Activated naive CD4-positive, alpha-beta T cell treated with anti-CD3 and anti-CD28 coated beads for 36 hours (primary cell): ENCODE measurements at regions of chr4 and their contacts with region 1.

Region 1: DNA sequence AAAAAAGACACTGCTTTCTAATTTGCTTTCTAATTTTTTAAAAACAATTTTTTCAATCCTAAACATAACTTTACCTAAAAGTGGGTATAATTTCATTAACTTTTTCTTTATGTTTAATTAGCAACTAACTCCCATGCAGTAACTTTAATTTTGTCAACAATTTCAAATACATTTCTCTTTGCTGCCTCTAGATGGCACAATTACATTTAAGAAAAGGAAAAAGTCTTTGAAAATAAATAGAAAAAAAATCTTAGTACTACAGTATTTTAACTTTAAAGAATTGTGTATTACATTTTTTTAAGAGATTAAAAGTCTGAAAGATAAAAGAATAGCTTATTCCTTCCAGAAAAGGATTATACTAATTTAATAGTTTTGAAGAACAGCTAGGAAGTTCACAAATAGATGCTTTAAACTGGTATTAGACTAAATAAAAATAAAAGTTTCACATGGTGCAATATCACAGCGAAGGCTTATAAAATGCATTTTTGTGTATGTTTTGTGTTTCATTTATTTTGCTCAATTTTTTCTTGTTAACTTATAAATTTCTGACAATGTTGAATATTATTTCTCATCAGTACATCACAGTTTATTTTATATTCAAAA is 105.1 kb downstream of the ADGRA3 start:
- DNase-seq: no peak
- H3K4me3 Mint-ChIP-seq: no peak overlapping the region
- H3K27ac Mint-ChIP-seq: no peak overlapping the region
- H3K4me1 Mint-ChIP-seq: no peaks in the 10 kb centered on the region
- H3K27me3 Mint-ChIP-seq: no peaks in the 10 kb centered on the region

Region 2: DNA sequence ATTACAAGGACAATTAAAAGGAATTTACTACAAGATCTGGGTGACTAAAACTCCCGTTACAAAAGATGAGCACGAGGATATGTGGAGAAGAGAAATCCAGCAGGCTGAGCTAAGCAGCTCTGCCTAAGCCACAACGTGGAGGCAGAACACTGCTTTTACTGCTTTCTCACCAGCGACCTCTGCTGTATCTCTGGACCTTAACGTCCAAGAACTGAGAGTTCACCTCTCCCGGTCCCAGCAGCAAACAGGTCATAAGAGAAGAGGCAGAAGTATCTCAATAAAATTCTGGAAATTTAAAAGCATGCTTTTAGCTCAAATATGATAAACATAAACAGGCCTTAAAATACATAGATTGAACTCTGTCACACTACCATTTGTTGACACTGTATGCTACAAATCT is 24.1 kb after region 1 on chr4:
- CTCF ChIA-PET with region 1: interaction called, 5 read pairs
- intact Hi-C with region 1: loop called (anchors 2 kb)
- DNase-seq: peak; percentile 39
- H3K4me3 Mint-ChIP-seq: no peak overlapping the region
- H3K27ac Mint-ChIP-seq: no peak overlapping the region
- H3K4me1 Mint-ChIP-seq: peaks cover 4% of the 10 kb centered on the region
- H3K27me3 Mint-ChIP-seq: no peaks in the 10 kb centered on the region

Region 3: GRCh38 chr4:22463179-22463578 is 52.4 kb after region 1 on chr4:
- CTCF ChIA-PET with region 1: interaction called, 14 read pairs
- intact Hi-C with region 1: loop called (anchors 1 kb)
- DNase-seq: peak; percentile 64
- H3K4me3 Mint-ChIP-seq: no peak overlapping the region
- H3K27ac Mint-ChIP-seq: no peak overlapping the region
- H3K4me1 Mint-ChIP-seq: peaks cover 8% of the 10 kb centered on the region
- H3K27me3 Mint-ChIP-seq: no peaks in the 10 kb centered on the region

Region 4: DNA sequence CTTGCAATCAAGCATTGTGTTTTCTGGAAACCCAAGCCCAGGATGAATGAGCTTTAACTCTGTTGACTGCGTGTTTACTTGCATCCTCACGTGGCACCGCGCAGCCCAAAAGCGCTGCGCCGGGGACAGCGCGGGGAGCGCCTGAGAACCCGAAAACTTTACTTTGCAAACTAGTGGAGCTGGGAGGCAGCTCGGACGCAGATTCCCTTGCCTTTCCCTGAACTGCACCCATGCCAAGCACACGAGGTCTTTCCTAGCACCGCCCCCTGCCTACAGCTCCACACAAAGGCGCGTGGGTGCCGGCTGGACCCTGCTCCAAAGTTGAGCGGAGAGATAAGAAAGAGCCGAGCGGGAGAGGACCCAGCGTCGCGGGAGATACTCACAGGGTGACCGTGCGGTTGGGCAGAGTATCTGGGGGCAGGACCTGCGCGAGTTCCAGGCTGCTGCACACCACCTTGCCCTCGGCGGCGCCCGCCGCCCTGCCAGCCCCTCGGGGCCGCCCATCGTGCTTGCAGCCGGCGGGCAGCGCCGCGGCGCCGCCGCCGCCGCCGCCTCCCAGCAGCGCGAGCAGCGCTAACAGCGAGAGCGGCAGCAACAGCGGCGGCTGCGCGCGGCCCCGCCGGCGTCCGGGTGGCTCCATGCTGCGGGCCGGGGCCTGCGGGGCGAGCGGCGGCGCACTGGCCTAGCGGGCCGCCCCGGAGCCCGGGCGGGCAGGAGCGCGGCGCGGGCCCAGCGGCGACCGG is 104.6 kb after region 1 on chr4:
- CTCF ChIA-PET with region 1: no interaction called
- intact Hi-C with region 1: loop called (anchors 2 kb)
- DNase-seq: peak; percentile 34
- H3K4me3 Mint-ChIP-seq: peak overlapping the region; percentile 97
- H3K27ac Mint-ChIP-seq: peak overlapping the region; percentile 77
- H3K4me1 Mint-ChIP-seq: peaks cover 17% of the 10 kb centered on the region
- H3K27me3 Mint-ChIP-seq: peaks cover 9% of the 10 kb centered on the region

Region 5: DNA sequence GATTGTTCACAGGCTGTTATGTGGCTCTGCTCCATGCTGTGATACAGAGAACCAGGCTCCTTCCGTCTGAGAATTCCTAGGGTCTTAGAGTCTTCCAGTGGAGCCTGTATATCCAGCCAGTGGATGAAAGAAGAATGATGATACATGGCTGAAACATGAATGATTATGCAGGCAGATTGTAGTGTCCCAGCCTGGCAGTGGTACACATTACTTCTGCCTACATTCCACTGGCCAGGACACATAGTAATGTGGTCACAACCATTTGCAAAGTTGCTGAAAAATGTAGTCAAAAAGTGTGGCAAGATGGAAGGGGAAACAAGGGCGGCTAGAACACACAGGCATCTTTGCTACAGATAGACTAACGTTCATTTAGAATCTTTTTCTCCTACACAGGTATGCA is 277.5 kb after region 1 on chr4:
- CTCF ChIA-PET with region 1: interaction called, 7 read pairs
- intact Hi-C with region 1: loop called (anchors 1 kb)
- DNase-seq: no peak
- H3K4me3 Mint-ChIP-seq: no peak overlapping the region
- H3K27ac Mint-ChIP-seq: no peak overlapping the region
- H3K4me1 Mint-ChIP-seq: peaks cover 19% of the 10 kb centered on the region
- H3K27me3 Mint-ChIP-seq: no peaks in the 10 kb centered on the region